ENCODE measurements at regions of chr19 and their contacts with region 1.

Region 1: GRCh38 chr19:43651758-43652545 is 12.3 kb upstream of the CADM4 start:
- DNase-seq: peak; percentile 48 to 60
- ATAC-seq: peak; percentile 47 to 75 (median 70)
- H3K4me3 ChIP-seq: no peak overlapping the region
- H3K27ac ChIP-seq: no peak overlapping the region
- H3K4me1 ChIP-seq: no peaks in the 10 kb centered on the region
- H3K27me3 ChIP-seq: no peaks in the 10 kb centered on the region
- CTCF ChIP-seq: peak; percentile 60

Region 2: DNA sequence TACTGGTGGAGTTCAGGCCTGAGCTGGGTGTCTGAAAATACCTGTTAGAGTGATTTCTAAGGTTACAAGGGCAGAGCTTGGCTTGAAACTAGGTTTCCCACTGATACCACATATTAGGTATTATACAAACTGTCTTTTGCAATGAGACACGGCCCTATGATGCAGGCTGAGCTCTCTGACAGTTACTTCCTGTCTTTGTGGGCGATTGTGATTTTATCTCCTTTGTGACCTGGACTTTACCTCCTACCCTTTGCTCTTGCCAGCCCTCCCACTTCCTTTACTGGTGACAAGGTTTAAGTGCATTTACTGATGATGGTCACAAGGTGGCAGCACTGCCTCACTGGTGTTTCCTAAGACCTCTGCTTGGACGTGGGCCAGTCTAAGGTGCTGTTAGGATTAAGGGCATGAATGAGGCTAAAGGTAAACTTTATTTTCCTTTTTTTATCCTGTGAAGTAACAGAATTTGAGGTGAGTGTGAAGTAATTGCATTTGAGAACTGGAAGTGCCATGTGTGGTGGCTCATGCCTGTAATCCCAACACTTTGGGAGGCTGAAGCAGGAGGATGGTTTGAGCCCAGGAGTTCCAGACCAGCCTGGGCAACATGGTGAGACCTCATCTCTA is 1201.5 kb before region 1 on chr19:
- intact Hi-C with region 1: loop called in 1 of 2 experiments (anchors 5 kb)
- DNase-seq: peak; percentile 70 to 77
- ATAC-seq: peak; percentile 57 to 78 (median 78)
- H3K4me3 ChIP-seq: no peak overlapping the region
- H3K27ac ChIP-seq: peak overlapping the region; percentile 41
- H3K4me1 ChIP-seq: no peaks in the 10 kb centered on the region
- H3K27me3 ChIP-seq: peaks cover 0 to 6% (median 3%) of the 10 kb centered on the region in 3 donors
- CTCF ChIP-seq: peak; percentile 87

Region 3: GRCh38 chr19:43416951-43417623 is 234.9 kb before region 1 on chr19:
- intact Hi-C with region 1: no loop called
- DNase-seq: no peak
- ATAC-seq: no peak
- H3K4me3 ChIP-seq: no peak overlapping the region
- H3K27ac ChIP-seq: no peak overlapping the region
- H3K4me1 ChIP-seq: no peaks in the 10 kb centered on the region
- H3K27me3 ChIP-seq: no peaks in the 10 kb centered on the region
- CTCF ChIP-seq: no peak

Region 4: DNA sequence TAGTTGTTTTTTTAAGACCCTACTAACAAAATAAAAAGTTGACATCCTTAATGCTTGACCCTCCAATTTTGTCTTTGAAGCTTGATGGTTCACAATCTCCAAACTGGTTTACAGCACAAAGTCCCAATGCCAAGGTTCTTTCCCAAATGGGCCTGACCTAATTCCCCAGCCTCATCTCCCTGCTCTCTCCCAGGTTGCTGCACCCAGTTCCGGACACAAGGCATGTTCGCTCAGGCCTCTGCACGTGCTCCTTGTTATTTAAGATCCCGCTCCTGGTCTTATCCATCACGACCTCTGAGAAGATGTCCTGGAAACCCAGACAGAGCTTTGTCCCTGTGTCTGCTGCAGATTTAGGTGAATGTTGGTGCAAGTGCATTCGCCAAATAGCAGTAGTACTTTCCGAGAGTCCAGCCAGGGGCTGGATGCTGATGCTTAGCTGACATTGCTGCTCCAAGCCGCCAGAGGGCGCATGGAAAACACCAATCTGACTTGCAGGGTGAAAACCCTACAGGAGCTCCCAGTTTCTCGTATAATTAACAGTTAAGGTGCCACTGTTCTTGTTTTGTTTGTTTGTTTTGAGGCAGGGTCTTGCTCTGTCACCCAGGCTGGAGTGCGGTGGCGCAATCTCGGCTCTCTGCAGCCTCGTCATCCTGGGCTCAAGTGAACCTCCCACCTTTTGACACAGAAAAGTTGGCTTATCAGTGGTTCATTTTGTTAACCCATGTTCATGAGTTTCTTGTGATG is 205.0 kb before region 1 on chr19:
- intact Hi-C with region 1: loop called (anchors 10 kb)
- DNase-seq: peak; percentile 67 to 88
- ATAC-seq: peak; percentile 73 to 91 (median 80)
- H3K4me3 ChIP-seq: no peak overlapping the region
- H3K27ac ChIP-seq: no peak overlapping the region
- H3K4me1 ChIP-seq: no peaks in the 10 kb centered on the region
- H3K27me3 ChIP-seq: no peaks in the 10 kb centered on the region
- CTCF ChIP-seq: peak; percentile 97

Region 5: DNA sequence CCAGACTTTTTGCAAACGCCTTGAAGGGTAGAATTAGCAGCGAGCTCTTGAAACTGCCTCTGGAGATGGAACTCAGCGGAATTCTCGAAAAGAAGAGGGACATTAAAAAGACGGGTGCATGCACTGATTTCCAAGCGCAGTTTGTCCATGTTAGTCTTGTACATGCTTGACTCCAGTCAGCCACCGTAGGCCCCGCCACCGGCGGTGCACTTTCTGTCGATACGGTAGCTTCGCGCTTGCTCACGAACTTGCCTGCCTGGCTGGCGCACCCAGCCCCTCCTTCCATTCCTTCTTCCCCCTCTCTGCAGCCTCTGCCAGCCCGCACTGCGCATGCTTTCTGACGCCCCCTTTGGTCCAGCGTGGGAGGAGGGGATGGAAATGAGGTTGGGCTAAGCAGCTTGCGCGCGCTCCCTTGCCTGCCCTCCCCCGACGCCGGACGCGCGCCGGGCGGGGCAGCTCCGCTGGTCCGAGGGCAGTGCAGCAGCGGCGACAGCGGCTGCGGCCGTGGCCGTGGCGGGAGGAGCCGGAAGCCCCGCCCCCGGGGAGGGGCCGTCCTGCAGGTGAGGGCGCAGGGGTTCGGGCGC is 118.9 kb before region 1 on chr19 and contains the start of gene ZNF575:
- intact Hi-C with region 1: loop called in 1 of 2 experiments (anchors 5 kb)
- DNase-seq: peak; percentile 86 to 92
- ATAC-seq: peak; percentile 64 to 77 (median 68)
- H3K4me3 ChIP-seq: peak within 1 kb of the TSS; percentile 76
- H3K27ac ChIP-seq: peak within 1 kb of the TSS; percentile 75
- H3K4me1 ChIP-seq: no peaks in the 10 kb centered on the region
- H3K27me3 ChIP-seq: no peaks in the 10 kb centered on the region
- CTCF ChIP-seq: no peak
- total RNA-seq, gene ZNF575: 0.40 to 1.6 (median 1.2) TPM

Region 6: DNA sequence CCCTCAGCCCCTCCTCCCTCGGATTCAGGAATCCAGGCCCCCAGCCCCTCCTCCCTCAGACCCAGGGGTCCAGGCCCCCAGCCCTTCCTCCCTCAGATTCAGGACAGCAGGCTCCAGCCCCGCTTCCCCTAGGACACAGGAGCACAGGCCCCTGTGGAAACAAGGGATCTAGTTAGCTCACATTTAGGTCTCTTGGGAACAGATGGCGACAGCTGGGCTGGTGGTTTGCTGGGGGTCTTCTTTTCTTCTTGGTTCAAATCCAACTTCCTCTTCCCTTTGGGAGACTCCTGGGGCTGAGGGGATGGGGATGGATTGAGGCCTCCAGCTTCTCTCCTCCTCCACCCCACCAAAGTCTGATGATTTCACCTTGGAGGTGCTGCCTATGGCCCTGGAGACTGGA is 99.3 kb before region 1 on chr19:
- intact Hi-C with region 1: loop called in 1 of 2 experiments (anchors 5 kb)
- DNase-seq: no peak
- ATAC-seq: no peak
- H3K4me3 ChIP-seq: no peak overlapping the region
- H3K27ac ChIP-seq: no peak overlapping the region
- H3K4me1 ChIP-seq: no peaks in the 10 kb centered on the region
- H3K27me3 ChIP-seq: no peaks in the 10 kb centered on the region
- CTCF ChIP-seq: no peak